ENCODE measurements at regions of chr15 and their contacts with region 1.

Region 1: GRCh38 chr15:33894193-33894592 is 74.1 kb upstream of the CHRM5 start:
- DNase-seq: no peak
- ATAC-seq: no peak
- H3K4me3 ChIP-seq: no peak overlapping the region
- H3K27ac ChIP-seq: no peak overlapping the region
- H3K4me1 ChIP-seq: peaks cover 4% of the 10 kb centered on the region
- H3K27me3 ChIP-seq: no peaks in the 10 kb centered on the region
- CTCF ChIP-seq: no peak
- POLR2A ChIP-seq: no peak
- RAD21 ChIP-seq: no peak

Region 2: DNA sequence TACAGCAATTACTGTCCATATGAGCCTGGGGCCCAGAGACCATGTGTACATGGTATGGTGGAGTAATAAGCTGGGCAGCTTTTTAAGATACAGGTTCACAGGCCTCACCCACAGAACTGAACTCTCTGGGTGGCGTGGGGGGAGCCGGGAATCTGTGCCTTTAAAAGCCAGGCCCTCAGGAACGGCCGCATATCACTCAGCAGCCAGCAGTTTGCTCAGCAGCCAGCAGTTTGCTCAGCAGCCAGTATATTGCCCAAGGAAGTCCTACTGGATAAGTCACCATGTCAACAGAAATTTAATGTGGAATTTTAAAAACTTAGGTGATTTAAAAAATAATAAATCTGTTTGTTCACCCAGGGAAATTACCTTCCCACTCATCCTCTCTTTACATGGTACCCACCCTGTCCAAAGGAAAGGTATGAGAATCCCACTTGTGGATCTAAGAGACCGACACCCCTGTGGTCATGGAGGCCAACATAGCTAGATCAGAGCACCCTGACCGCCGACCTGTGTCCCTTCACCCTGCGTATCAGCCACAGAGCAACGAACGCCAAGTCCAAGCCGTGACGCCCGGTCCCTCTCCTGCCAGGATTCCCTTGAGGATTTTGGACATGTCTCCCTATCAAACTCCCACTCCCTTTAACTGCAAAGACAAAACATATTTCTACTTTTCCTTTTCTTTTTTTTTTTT is 21.6 kb before region 1 on chr15:
- CTCF ChIA-PET with region 1: no interaction called
- POLR2A ChIA-PET with region 1: no interaction called
- dilution Hi-C with region 1: no loop called
- in situ Hi-C with region 1: no loop called
- intact Hi-C with region 1: loop called (anchors 2 kb)
- DNase-seq: peak; percentile 21
- ATAC-seq: peak; percentile 70
- H3K4me3 ChIP-seq: no peak overlapping the region
- H3K27ac ChIP-seq: no peak overlapping the region
- H3K4me1 ChIP-seq: no peaks in the 10 kb centered on the region
- H3K27me3 ChIP-seq: no peaks in the 10 kb centered on the region
- CTCF ChIP-seq: no peak
- POLR2A ChIP-seq: no peak
- RAD21 ChIP-seq: no peak

Region 3: GRCh38 chr15:34241372-34242330 is 347.5 kb after region 1 on chr15:
- CTCF ChIA-PET with region 1: no interaction called
- POLR2A ChIA-PET with region 1: no interaction called
- dilution Hi-C with region 1: no loop called
- in situ Hi-C with region 1: no loop called
- intact Hi-C with region 1: no loop called
- DNase-seq: peak; percentile 51
- ATAC-seq: peak; percentile 59
- H3K4me3 ChIP-seq: no peak overlapping the region
- H3K27ac ChIP-seq: no peak overlapping the region
- H3K4me1 ChIP-seq: peaks cover 4% of the 10 kb centered on the region
- H3K27me3 ChIP-seq: no peaks in the 10 kb centered on the region
- CTCF ChIP-seq: peak; percentile 65
- POLR2A ChIP-seq: no peak
- RAD21 ChIP-seq: peak; percentile 47

Measured in IMR-90 (cell line).